Posterior vena cava (tissue), 2 donors: ENCODE measurements at regions of chr16 and their contacts with region 1.

Region 1: DNA sequence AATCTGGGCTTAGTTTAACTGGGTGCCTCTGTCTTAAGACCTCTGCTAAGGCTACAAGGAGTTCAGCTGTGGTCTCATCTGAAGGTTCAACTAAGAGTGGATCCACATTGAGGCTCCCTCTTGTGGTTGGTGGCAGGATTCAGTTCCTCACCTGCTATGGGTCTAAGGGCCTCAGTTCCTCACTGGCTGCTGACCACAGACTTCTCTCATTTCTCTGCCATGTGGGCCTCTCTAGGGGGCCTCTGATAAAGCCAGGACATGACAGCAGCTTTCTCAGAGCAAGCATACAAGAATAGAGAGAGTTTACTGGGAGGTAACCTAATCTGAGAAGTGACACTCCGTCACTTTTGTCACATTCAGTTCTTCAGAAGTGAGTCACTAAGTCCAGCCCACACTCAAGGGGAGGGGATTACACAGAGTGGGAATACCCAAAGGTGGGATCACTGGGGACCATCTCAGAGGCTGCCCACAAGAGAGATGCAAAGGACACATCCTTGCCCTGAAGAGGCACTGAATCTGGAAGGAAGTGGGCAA is 19.2 kb upstream of the ABAT start:
- DNase-seq: no peak

Region 2: DNA sequence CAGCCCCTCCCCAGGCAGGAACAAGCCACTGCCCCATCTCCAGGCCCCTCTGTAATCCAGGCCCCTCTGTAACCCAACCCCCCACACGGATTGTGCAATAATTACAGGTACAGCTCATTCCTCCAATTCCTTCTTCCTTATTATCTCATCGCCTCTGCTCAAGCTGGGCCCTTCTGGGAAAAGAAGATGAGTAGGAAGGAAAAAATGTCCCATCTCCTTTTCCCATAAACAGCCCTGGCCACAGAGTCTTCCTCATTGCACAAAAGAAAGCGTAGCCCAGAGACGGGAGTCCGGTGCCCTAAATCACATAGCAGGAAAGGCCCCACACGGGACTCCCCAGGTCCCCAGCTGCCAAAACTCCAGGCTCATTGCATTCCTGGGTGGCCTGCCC is 223.3 kb after region 1 on chr16:
- intact Hi-C with region 1: loop called (anchors 5 to 10 kb)
- DNase-seq: peak; percentile 64

Region 3: GRCh38 chr16:8885674-8886592 is 230.7 kb after region 1 on chr16:
- intact Hi-C with region 1: loop called in 1 of 2 experiments (anchors 10 kb)
- DNase-seq: peak; percentile 71

Region 4: DNA sequence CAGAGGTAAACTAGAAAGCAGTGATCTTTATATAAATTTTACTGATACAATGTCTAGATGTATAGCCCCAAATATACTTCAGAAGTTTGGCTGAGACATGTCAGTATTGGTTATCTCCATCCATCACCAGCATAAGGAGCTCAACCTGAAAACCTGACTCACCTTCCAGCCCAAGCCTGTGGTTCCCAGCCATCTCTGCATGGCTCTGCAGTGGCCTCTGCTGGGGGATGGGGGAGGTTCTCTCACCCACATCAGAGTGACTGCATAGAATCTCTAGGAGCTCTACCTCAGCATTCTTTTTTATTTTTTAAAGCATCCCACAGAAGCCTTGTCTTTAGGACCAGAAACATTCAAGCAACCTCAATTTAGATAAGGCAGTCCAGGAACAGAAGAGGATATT is 281.2 kb after region 1 on chr16:
- intact Hi-C with region 1: no loop called
- DNase-seq: no peak